WTC11 (cell line): ENCODE measurements at regions of chr13 and their contacts with region 1.

Region 1: GRCh38 chr13:30905932-30906383 is at the start of gene MEDAG:
- DNase-seq: peak; percentile 15
- ATAC-seq: peak; percentile 56
- H3K4me3 Mint-ChIP-seq: peak within 1 kb of the TSS; percentile 68
- H3K27ac Mint-ChIP-seq: no peak within 1 kb of the TSS
- H3K4me1 Mint-ChIP-seq: peaks cover 6% of the 10 kb centered on the region
- H3K27me3 Mint-ChIP-seq: peaks cover 52% of the 10 kb centered on the region
- CTCF ChIP-seq: no peak
- total RNA-seq, gene MEDAG: 1.9 to 2.4 TPM (median 2.1 TPM) in 3 replicates

Region 2: GRCh38 chr13:30847650-30848307 is 58.2 kb before region 1 on chr13:
- CTCF ChIA-PET with region 1: no interaction called
- POLR2A ChIA-PET with region 1: no interaction called
- DNase-seq: no peak
- ATAC-seq: no peak
- H3K4me3 Mint-ChIP-seq: no peak overlapping the region
- H3K27ac Mint-ChIP-seq: no peak overlapping the region
- H3K4me1 Mint-ChIP-seq: no peaks in the 10 kb centered on the region
- H3K27me3 Mint-ChIP-seq: no peaks in the 10 kb centered on the region
- CTCF ChIP-seq: no peak

Region 3: GRCh38 chr13:30880856-30881155 is 25.2 kb before region 1 on chr13:
- CTCF ChIA-PET with region 1: no interaction called
- POLR2A ChIA-PET with region 1: no interaction called
- DNase-seq: no peak
- ATAC-seq: no peak
- H3K4me3 Mint-ChIP-seq: no peak overlapping the region
- H3K27ac Mint-ChIP-seq: no peak overlapping the region
- H3K4me1 Mint-ChIP-seq: peaks cover 16% of the 10 kb centered on the region
- H3K27me3 Mint-ChIP-seq: no peaks in the 10 kb centered on the region; the same call in 1 of the 2 replicates
- CTCF ChIP-seq: no peak

Region 4: GRCh38 chr13:30932481-30933353 is 26.8 kb after region 1 on chr13 and contains the start of gene TEX26:
- CTCF ChIA-PET with region 1: interaction called, 11 read pairs
- POLR2A ChIA-PET with region 1: no interaction called
- DNase-seq: peak; percentile 83
- ATAC-seq: peak; percentile 95
- H3K4me3 Mint-ChIP-seq: peak within 1 kb of the TSS; percentile 62
- H3K27ac Mint-ChIP-seq: no peak within 1 kb of the TSS
- H3K4me1 Mint-ChIP-seq: peaks cover 24% of the 10 kb centered on the region
- H3K27me3 Mint-ChIP-seq: peaks cover 30% of the 10 kb centered on the region
- CTCF ChIP-seq: no peak
- total RNA-seq, gene TEX26: not detected in 3 replicates

Region 5: GRCh38 chr13:31159306-31159705 is 253.3 kb after region 1 on chr13:
- CTCF ChIA-PET with region 1: no interaction called
- POLR2A ChIA-PET with region 1: no interaction called
- DNase-seq: no peak
- ATAC-seq: no peak
- H3K4me3 Mint-ChIP-seq: peak overlapping the region; percentile 97
- H3K27ac Mint-ChIP-seq: no peak overlapping the region
- H3K4me1 Mint-ChIP-seq: peaks cover 27% of the 10 kb centered on the region
- H3K27me3 Mint-ChIP-seq: no peaks in the 10 kb centered on the region
- CTCF ChIP-seq: no peak

Region 6: DNA sequence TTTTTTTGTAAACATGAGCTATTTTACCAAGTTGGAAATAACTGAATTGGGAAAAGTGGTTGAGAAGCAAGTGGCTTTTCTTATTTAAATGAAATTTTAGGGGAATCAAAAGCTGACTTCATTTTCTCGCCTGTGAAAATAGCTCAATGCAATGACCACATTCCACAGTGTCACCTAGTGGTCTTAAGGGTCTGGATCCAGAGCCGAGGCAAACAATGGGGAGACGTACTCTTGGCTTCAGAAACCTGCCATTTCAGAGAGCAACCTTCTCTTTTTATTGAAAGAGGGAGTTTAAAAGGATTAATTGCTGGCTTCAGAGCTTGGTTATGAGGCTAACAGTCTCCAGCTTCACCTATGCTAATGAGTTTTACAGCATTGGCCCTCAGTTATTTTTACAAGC is 793.7 kb after region 1 on chr13:
- CTCF ChIA-PET with region 1: no interaction called
- POLR2A ChIA-PET with region 1: no interaction called
- DNase-seq: peak; percentile 12
- ATAC-seq: peak; percentile 87
- H3K4me3 Mint-ChIP-seq: no peak overlapping the region
- H3K27ac Mint-ChIP-seq: no peak overlapping the region
- H3K4me1 Mint-ChIP-seq: peaks cover 33% of the 10 kb centered on the region
- H3K27me3 Mint-ChIP-seq: no peaks in the 10 kb centered on the region
- CTCF ChIP-seq: no peak